ENCODE measurements at regions of chr10 and their contacts with region 1.

Region 1: DNA sequence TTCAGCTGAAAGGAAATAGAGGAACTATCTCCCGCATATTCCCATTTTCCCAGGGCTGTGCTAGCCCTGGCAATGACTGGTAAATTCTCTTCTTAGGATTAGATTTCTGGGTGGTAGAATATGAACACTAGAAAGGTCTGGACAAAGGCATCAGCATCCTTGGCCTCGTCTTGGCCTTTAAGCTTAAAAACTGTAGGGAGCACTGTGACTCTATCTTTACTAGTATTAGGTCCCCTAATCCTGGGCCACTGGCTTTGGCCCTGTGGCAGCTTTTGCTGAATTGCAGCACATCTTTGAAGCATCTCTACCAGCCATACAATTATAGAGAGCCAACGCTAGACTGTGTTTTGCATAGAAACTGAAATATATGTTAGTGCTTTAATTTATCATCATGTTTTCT is 41.5 kb upstream of the EBLN1 start:
- DNase-seq: peak; percentile 40
- H3K4me3 Mint-ChIP-seq: no peak overlapping the region
- H3K27ac Mint-ChIP-seq: no peak overlapping the region
- H3K4me1 Mint-ChIP-seq: peaks cover 25% of the 10 kb centered on the region
- H3K27me3 Mint-ChIP-seq: peaks cover 4% of the 10 kb centered on the region

Region 2: GRCh38 chr10:22589851-22590514 is 330.7 kb after region 1 on chr10:
- CTCF ChIA-PET with region 1: no interaction called
- intact Hi-C with region 1: loop called (anchors 1 kb)
- DNase-seq: no peak
- H3K4me3 Mint-ChIP-seq: no peak overlapping the region
- H3K27ac Mint-ChIP-seq: no peak overlapping the region
- H3K4me1 Mint-ChIP-seq: peaks cover 23% of the 10 kb centered on the region
- H3K27me3 Mint-ChIP-seq: no peaks in the 10 kb centered on the region

Region 3: DNA sequence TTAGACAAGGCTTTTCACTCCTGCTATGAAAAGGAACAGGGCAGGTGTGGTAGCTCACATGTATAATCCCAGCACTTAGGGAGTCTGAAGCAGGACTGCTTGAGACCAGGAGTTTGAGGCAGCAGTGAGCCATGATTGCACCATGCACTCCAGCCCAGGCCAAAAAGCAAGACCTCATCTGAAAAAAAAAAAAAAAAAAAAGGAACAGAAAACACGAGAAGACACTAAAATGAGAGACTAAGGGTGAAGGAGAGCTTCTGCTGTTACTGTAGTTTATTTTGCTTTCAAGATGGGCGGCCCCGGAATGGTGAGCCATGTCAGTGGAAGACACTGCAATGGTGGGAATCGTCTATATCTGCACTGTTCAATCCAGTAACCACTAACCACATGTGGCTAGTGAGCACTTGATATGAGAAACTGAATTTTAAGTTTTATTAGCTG is 445.2 kb after region 1 on chr10:
- CTCF ChIA-PET with region 1: no interaction called
- intact Hi-C with region 1: no loop called
- DNase-seq: no peak
- H3K4me3 Mint-ChIP-seq: no peak overlapping the region
- H3K27ac Mint-ChIP-seq: peak overlapping the region; percentile 46
- H3K4me1 Mint-ChIP-seq: peaks cover 94% of the 10 kb centered on the region
- H3K27me3 Mint-ChIP-seq: no peaks in the 10 kb centered on the region

Measured in activated naive CD4-positive, alpha-beta T cell treated with anti-CD3 and anti-CD28 coated beads for 36 hours (primary cell).